ENCODE measurements at regions of chr9 and their contacts with region 1.

Region 1: DNA sequence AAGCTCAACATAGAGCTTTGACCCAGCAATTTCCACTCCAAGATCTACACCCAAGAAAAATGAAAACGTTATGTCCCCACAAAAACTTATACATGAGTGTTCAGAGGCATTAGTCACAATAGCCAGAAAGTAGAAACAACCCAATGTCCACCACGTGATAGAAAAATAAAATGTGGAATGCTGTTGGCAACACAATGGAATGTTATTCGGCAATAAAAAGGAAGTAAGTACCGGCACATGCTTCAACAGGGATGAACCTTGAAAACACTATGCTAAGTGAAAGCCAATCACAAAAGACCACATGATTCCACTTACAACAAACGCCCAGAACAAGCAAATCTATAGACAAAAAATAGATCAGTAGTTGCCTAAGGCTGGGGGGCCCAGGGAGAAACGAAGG is 6.0 kb downstream of the UBQLN1 start:
- DNase-seq: no peak

Region 2: DNA sequence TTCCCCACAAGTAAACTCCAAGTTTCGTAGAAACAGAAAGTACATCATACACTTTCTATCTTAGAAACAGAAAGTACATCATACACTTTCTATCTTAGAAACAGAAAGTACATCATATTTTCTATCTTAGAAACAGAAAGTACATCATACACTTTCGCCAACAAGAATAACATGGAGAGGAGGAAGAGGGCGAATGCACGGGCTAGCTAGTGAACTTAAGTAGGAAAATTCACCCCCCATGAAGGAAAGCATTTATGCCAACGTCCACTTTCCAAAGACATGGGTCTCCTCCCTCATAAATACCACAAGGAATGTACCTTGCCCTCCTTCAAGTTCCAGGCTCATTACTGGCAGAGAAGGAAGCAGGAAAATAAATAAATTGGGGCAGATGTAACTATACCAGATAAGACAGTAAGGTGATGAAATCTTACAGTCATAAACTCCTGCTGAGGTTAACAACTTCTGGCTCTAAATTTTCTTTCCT is 228.2 kb before region 1 on chr9:
- intact Hi-C with region 1: loop called in 1 of 2 experiments (anchors 5 kb)
- DNase-seq: no peak

Measured in posterior vena cava (tissue), 2 donors.